Dendritic cell treated with granulocyte-macrophage colony-stimulating factor and Interleukin-4, amounts not matched to agents 40 ng/mL and 50 ng/mL, for 4 days (primary cell): ENCODE measurements at regions of chr7 and their contacts with region 1.

Region 1: DNA sequence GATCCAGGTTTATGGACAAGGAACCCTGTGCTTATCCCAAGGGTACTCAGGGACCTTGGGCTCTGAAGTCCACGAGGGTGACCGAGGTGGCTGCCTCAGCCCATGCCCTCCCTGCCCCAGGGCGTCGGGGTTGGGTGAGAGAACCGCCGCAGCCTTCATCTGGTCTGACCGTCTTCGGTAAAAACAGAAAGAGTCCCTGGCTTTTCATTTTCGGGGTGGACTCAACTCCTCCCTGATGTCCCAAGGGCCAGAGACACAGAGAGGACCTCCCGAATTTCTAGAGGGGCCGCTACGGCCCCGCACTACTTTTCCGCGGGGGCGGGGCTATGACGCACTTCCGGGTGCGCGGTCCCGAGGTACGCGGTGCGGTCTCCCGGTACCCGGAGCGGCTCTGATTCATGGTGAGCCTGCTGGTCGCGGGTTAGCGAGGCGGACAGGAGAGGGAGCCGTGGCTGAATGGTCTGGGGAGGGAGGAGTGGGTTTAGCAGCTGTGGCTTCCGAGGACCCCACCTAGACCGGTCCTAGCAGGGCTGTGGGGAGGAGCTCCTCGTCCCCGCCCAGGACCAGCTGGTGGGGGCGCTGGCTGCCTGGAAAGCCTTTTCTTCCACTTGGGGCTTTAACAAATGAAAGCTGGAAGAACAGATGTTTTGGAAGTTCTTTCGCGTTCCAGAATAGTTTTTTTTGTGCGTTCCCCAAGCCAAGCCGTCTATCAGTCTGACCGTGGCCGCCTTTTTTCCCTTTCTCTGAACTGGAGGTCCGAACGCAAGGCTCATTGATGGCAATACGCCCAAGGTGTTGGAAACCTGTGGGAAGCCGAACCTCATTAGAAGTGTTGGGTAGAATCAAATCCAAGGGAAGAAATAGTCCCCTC is at the start of gene ZSCAN21:
- H3K4me3 Mint-ChIP-seq: peak within 1 kb of the TSS; percentile 86
- H3K27ac Mint-ChIP-seq: peak within 1 kb of the TSS; percentile 97
- H3K4me1 Mint-ChIP-seq: peaks cover 17% of the 10 kb centered on the region
- H3K27me3 Mint-ChIP-seq: no peaks in the 10 kb centered on the region

Region 2: DNA sequence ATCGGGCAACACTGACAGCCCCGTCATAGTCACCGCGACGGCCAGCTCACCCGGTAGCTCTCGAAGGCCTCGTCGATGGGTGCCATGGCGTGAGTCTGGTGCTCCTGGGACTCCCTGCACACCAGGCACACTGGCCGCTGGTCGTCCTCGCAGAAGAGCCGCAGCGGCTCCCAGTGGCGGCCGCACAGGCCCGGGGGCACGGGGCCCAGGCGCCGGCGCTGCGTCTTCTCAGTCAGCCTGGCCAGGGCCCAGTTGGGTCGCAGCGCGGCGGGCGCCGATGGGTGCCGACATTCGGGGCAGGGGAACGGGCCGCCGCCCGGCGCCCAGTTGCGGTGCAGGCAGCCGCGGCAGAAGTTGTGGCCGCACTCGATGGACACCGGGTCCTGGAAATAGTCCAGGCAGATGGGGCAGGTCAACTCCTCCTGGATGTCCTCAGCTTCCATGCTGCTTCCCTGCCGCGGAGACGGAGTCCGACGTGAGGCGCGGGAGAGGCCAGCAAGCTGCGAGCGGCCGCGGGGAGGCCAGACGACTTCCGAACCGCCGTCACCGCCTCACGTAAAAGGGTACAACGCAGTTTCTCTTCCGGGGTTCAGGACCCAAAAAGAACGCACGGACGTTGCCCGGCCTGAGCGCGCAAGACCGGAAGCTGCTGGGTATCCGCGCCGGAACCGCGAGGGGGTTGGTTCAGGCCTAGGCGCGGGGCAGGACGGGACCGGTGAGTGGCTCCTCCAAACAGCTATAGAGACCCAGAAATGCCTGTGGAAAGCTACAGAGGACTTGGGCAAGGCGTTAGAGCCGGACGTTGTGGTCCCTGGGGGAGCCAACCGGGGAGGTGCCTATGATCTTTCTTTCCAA is 130.5 kb before region 1 on chr7 and contains the start of gene TRIM4:
- intact Hi-C with region 1: loop called (anchors 10 kb)
- H3K4me3 Mint-ChIP-seq: peak within 1 kb of the TSS; percentile 88
- H3K27ac Mint-ChIP-seq: peak within 1 kb of the TSS; percentile 93
- H3K4me1 Mint-ChIP-seq: peaks cover 29% of the 10 kb centered on the region
- H3K27me3 Mint-ChIP-seq: peaks cover 8% of the 10 kb centered on the region

Region 3: GRCh38 chr7:99990460-99990852 is 59.2 kb before region 1 on chr7:
- intact Hi-C with region 1: loop called (anchors 2 kb)
- H3K4me3 Mint-ChIP-seq: no peak overlapping the region
- H3K27ac Mint-ChIP-seq: no peak overlapping the region
- H3K4me1 Mint-ChIP-seq: peaks cover 11% of the 10 kb centered on the region
- H3K27me3 Mint-ChIP-seq: peaks cover 19% of the 10 kb centered on the region

Region 4: DNA sequence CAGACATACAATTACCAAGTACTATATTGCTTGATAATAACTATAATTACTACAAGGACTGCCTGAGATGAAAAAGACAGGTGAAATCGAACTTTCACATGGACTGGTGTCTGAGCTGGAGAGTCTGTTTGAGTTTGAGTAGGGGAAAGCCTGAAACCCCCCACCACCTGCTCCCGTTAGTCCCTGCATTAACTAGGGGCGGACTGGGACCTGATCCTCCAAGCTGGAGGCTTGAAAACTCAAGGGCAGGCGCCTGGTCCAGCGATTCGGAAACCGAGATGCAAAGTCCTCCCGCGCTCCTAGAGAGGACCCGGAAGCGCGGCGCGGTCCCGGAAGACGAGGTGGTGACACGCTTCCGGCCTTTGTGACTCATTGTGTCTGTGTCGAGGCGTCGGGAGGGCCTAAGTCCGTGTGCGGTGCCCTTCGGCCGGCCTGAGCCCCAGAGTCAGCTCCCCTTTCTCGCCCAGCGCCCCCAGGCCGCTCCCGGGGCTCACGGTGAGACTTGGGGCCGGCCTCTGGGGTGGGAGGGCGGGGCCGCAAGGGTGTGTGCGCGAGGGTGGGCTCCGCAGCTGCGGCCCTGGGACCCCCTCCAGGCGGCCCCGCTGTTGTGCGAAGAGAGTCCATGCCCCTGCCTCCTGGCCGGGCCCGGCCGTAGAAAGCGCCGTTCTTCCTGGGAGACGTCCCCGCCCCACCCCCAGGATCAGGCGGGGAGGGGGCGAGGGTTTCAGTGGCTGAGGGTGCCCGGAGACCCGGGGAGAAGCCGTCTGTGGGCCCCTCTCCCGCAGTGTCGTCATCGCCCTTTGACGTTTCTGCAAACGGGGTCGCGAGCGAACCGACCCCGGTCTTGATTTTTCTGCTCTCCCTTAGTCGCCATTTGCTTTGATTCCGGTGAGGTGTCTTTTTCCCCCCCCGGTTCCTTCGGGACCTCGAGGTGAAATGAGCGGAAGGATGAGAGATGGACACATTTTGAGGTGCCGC is 34.2 kb before region 1 on chr7 and contains the start of gene ZKSCAN1:
- intact Hi-C with region 1: loop called (anchors 1 kb)
- H3K4me3 Mint-ChIP-seq: peak within 1 kb of the TSS; percentile 81
- H3K27ac Mint-ChIP-seq: peak within 1 kb of the TSS; percentile 91
- H3K4me1 Mint-ChIP-seq: peaks cover 47% of the 10 kb centered on the region
- H3K27me3 Mint-ChIP-seq: no peaks in the 10 kb centered on the region